ENCODE measurements at regions of chr11 and their contacts with region 1.

Region 1: GRCh38 chr11:78603792-78604191 is 29.1 kb upstream of the NARS2 start:
- DNase-seq: no peak

Region 2: GRCh38 chr11:78139422-78140391 is 464.1 kb before region 1 on chr11 and contains the start of gene ALG8:
- intact Hi-C with region 1: no loop called
- DNase-seq: peak; percentile 99
- total RNA-seq, gene ALG8: 25.6 to 28.6 TPM

Region 3: GRCh38 chr11:78630561-78631303 is 26.9 kb after region 1 on chr11:
- intact Hi-C with region 1: no loop called
- DNase-seq: no peak

Region 4: GRCh38 chr11:79648766-79649520 is 1045.2 kb after region 1 on chr11:
- intact Hi-C with region 1: loop called in 1 of 2 experiments (anchors 5 kb)
- DNase-seq: no peak

Measured in posterior vena cava (tissue), 2 donors.